Transverse colon (tissue), 4 donors: ENCODE measurements at regions of chr19 and their contacts with region 1.

Region 1: GRCh38 chr19:19776041-19777008 is 43.4 kb upstream of the ZNF14 start:
- DNase-seq: peak; percentile 98
- H3K4me3 ChIP-seq: peak overlapping the region; percentile 48 to 86 (median 60)
- H3K27ac ChIP-seq: peak overlapping the region; percentile 79 to 88 (median 80)
- H3K4me1 ChIP-seq: peaks cover 11 to 20% (median 16%) of the 10 kb centered on the region in 4 donors
- H3K27me3 ChIP-seq: no peaks in the 10 kb centered on the region
- CTCF ChIP-seq: peak in 1 of 5 experiments; percentile 35
- EP300 ChIP-seq: no peak
- POLR2A ChIP-seq: peak; percentile 66

Region 2: DNA sequence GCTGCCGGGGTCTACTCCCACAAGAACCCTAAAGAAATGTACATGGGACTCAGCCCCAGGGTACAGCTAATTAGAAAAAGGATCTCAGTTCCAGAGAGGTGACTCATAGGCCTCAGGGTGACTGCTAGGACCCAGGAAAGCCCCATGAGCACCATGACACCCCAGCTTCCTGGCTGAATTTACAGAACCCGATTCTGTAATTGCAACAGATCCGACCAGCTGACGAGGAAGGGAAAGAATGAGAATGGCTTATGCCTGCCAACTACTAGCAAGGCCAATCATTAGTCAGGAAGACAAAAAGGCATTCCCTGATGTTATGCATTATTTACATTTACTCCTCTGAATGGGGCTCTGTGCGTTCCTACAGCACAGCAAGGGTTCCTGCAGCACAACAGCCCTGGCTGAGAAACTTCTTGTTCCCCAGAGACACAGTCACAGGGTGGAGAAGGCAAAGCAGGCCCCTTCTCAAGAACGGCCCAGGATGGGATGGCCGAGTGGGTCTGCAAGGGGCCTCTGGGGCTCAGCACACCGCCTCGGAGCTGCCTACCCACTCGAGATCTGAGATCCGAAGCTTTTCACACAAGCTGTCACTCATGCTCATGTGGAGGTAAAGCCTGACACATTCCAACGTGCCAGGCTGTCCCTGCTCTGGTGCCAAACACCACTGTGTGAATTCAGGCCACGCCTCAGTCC is 185.0 kb before region 1 on chr19:
- in situ Hi-C with region 1: no loop called
- intact Hi-C with region 1: no loop called
- DNase-seq: peak; percentile 35
- H3K4me3 ChIP-seq: no peak overlapping the region
- H3K27ac ChIP-seq: peak overlapping the region; percentile 33 to 57 (median 38)
- H3K4me1 ChIP-seq: peaks cover 5 to 25% (median 8%) of the 10 kb centered on the region in 4 donors
- H3K27me3 ChIP-seq: no peaks in the 10 kb centered on the region
- CTCF ChIP-seq: no peak
- EP300 ChIP-seq: no peak
- POLR2A ChIP-seq: no peak

Region 3: GRCh38 chr19:19696386-19696785 is 79.9 kb before region 1 on chr19:
- in situ Hi-C with region 1: no loop called
- intact Hi-C with region 1: no loop called
- DNase-seq: no peak
- H3K4me3 ChIP-seq: no peak overlapping the region
- H3K27ac ChIP-seq: no peak overlapping the region
- H3K4me1 ChIP-seq: no peaks in the 10 kb centered on the region
- H3K27me3 ChIP-seq: no peaks in the 10 kb centered on the region
- CTCF ChIP-seq: no peak
- EP300 ChIP-seq: no peak
- POLR2A ChIP-seq: no peak

Region 4: DNA sequence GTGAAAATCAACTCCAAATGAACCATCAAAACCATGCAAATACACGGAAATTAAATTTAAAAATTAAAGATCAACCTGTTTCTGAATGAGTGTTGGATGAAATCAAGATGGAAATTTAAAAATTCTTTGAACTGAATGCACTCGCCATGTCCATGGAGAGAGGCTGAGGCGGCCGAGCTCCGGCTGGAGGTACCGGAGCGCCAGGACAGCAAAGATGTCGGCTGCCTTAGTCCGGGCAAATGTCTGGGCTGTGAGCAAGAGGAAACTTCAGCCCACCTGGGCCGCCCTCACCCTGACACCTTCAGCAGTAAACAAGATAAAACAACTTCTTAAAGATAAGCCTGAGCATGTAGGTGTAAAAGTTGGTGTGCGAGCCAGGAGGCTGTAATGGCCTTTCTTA is 50.5 kb after region 1 on chr19:
- in situ Hi-C with region 1: loop called in 1 of 4 experiments (anchors 5 kb)
- intact Hi-C with region 1: no loop called
- DNase-seq: no peak
- H3K4me3 ChIP-seq: no peak overlapping the region
- H3K27ac ChIP-seq: no peak overlapping the region
- H3K4me1 ChIP-seq: peaks cover 0 to 4% (median 2%) of the 10 kb centered on the region in 4 donors
- H3K27me3 ChIP-seq: no peaks in the 10 kb centered on the region
- CTCF ChIP-seq: no peak
- EP300 ChIP-seq: no peak
- POLR2A ChIP-seq: no peak